Activated CD4-positive, alpha-beta memory T cell treated with anti-CD3 and anti-CD28 coated beads for 36 hours (primary cell): ENCODE measurements at regions of chr10 and their contacts with region 1.

Region 1: DNA sequence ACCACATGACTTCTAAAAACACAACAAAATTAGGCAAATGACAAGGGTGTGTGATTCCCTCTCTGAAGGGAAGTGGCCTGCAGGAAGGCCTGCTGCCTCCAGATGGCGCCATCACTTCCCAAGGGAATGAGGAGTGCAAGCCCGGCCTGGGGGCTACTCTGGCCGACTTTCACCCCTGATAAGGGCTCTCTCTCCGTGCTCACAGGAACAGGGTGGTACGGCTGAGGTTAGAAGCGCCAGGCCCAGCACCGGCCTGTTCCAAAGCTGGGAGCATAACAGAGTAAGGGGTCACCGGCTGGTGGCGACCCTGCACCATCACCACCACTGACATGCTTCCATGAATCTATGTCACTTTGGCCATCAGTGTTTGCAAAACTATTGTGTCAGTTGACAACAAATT is 13.1 kb downstream of the RBP3 start:
- DNase-seq: peak; percentile 50
- H3K4me3 Mint-ChIP-seq: no peak overlapping the region
- H3K27ac Mint-ChIP-seq: no peak overlapping the region
- H3K4me1 Mint-ChIP-seq: no peaks in the 10 kb centered on the region
- H3K27me3 Mint-ChIP-seq: no peaks in the 10 kb centered on the region

Region 2: DNA sequence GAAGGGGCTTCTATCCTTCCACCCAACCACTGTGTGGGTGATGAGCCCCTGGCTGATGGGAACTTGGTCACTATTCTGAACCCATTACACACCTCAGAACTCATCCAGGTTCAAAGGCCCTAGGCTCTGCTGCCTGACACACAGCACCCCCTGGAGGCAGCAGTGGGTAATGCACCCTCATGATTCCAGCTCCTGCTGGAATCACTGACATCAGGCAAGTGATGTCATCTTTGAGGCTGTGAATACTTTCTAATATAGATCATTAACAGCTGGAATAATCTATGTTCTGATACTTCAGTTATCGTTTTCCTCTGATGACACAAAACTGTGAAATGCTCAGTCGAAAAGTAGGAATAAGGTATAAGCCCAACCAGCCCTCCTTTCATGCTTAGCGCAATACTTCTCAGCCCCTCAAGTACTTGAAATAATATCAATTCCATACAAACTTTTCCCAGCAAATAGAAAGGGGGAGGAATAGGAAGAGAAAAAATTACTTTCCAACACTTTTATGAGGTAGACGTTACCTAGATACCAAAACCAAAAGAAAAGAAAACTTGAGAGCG is 20.6 kb before region 1 on chr10:
- CTCF ChIA-PET with region 1: interaction called, 10 read pairs
- POLR2A ChIA-PET with region 1: no interaction called
- intact Hi-C with region 1: no loop called
- DNase-seq: peak; percentile 79
- H3K4me3 Mint-ChIP-seq: no peak overlapping the region
- H3K27ac Mint-ChIP-seq: no peak overlapping the region
- H3K4me1 Mint-ChIP-seq: no peaks in the 10 kb centered on the region
- H3K27me3 Mint-ChIP-seq: peaks cover 5% of the 10 kb centered on the region

Region 3: DNA sequence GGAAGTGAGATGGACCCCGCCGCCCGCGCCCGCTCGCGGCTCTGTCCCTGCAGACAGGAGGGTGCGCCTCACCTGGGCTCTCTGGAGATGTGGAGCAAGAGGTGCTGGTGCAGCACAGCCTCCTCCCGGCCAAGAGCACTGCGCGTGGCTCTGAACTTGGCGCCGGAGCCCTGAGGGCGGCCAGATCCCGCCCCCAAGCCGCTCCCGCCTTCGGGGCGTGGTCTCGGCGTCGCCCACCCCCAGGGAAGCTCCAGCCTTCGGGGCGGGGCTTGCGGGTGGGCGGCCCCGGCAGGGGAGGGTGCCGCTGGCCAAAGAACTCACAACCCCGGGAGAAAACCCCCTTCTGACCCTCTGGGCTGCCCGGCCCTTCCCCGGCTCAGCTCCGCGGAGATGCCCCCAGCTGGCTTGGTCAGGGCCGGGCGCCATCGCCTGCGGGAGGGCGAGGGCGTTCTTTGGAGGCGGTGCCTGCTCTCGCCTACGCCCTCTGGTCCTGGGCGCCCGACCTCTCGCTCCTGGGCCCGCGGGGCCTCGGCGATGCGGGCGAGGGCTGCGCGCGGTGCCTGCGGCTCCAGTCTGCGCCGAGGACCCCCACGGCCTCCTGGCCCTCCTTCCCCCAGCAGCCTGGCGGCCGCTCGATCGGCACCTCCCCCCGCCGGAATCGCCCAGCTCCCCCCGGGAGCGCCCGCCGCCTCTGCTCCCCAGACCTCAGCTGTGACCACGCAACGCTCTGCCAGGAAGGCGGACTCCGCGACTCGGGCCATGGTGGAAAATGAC is 23.0 kb after region 1 on chr10 and contains the start of gene ZNF488:
- CTCF ChIA-PET with region 1: no interaction called
- POLR2A ChIA-PET with region 1: no interaction called
- intact Hi-C with region 1: loop called (anchors 1 kb)
- DNase-seq: peak; percentile 78
- H3K4me3 Mint-ChIP-seq: peak within 1 kb of the TSS; percentile 81
- H3K27ac Mint-ChIP-seq: no peak within 1 kb of the TSS
- H3K4me1 Mint-ChIP-seq: peaks cover 11% of the 10 kb centered on the region
- H3K27me3 Mint-ChIP-seq: peaks cover 30% of the 10 kb centered on the region
- total RNA-seq, gene ZNF488: 0.27 to 0.38 TPM

Region 4: GRCh38 chr10:47409171-47409865 is 48.0 kb after region 1 on chr10:
- CTCF ChIA-PET with region 1: no interaction called
- POLR2A ChIA-PET with region 1: no interaction called
- intact Hi-C with region 1: no loop called
- DNase-seq: no peak
- H3K4me3 Mint-ChIP-seq: no peak overlapping the region
- H3K27ac Mint-ChIP-seq: no peak overlapping the region
- H3K4me1 Mint-ChIP-seq: no peaks in the 10 kb centered on the region
- H3K27me3 Mint-ChIP-seq: no peaks in the 10 kb centered on the region